Activated CD4-positive, alpha-beta memory T cell treated with anti-CD3 and anti-CD28 coated beads, Interleukin-2, amount 10 ng/mL, durations not matched to agents 7 days and 5 days (primary cell): ENCODE measurements at regions of chr9 and their contacts with region 1.

Region 1: GRCh38 chr9:20884985-20885593 is 146.4 kb downstream of the HACD4 start:
- DNase-seq: peak; percentile 63
- H3K4me3 Mint-ChIP-seq: no peak overlapping the region
- H3K27ac Mint-ChIP-seq: no peak overlapping the region
- H3K4me1 Mint-ChIP-seq: no peaks in the 10 kb centered on the region
- H3K27me3 Mint-ChIP-seq: no peaks in the 10 kb centered on the region

Region 2: GRCh38 chr9:19946441-19947109 is 938.5 kb before region 1 on chr9:
- CTCF ChIA-PET with region 1: interaction called, 10 read pairs
- POLR2A ChIA-PET with region 1: no interaction called
- DNase-seq: peak; percentile 34
- H3K4me3 Mint-ChIP-seq: no peak overlapping the region
- H3K27ac Mint-ChIP-seq: no peak overlapping the region
- H3K4me1 Mint-ChIP-seq: peaks cover 10% of the 10 kb centered on the region
- H3K27me3 Mint-ChIP-seq: peaks cover 4% of the 10 kb centered on the region

Region 3: DNA sequence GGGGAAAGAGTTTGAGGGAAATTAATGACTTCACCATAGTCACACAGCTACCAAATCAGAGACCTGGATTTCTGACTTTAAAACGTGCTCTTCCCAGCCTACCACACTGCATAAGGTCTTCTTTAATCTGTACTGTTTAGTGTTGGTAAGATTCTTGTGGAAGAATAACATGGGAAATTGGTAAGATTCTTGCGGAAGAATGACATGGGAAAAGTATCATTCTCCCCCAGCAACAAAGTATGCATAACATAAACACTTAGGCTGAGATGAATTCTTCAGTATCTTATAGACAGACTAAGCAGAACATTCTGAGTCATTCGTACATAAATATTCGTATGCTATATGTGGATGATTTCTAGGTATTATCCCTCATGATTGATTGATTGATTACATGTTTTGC is 30.6 kb before region 1 on chr9:
- CTCF ChIA-PET with region 1: no interaction called
- POLR2A ChIA-PET with region 1: no interaction called
- DNase-seq: no peak
- H3K4me3 Mint-ChIP-seq: no peak overlapping the region
- H3K27ac Mint-ChIP-seq: no peak overlapping the region
- H3K4me1 Mint-ChIP-seq: no peaks in the 10 kb centered on the region
- H3K27me3 Mint-ChIP-seq: no peaks in the 10 kb centered on the region

Region 4: GRCh38 chr9:20898885-20899554 is 13.9 kb after region 1 on chr9:
- CTCF ChIA-PET with region 1: interaction called, 11 read pairs
- POLR2A ChIA-PET with region 1: no interaction called
- DNase-seq: no peak
- H3K4me3 Mint-ChIP-seq: no peak overlapping the region
- H3K27ac Mint-ChIP-seq: no peak overlapping the region
- H3K4me1 Mint-ChIP-seq: no peaks in the 10 kb centered on the region
- H3K27me3 Mint-ChIP-seq: no peaks in the 10 kb centered on the region